Ovary (tissue), 10 donors: ENCODE measurements at regions of chr2 and their contacts with region 1.

Region 1: DNA sequence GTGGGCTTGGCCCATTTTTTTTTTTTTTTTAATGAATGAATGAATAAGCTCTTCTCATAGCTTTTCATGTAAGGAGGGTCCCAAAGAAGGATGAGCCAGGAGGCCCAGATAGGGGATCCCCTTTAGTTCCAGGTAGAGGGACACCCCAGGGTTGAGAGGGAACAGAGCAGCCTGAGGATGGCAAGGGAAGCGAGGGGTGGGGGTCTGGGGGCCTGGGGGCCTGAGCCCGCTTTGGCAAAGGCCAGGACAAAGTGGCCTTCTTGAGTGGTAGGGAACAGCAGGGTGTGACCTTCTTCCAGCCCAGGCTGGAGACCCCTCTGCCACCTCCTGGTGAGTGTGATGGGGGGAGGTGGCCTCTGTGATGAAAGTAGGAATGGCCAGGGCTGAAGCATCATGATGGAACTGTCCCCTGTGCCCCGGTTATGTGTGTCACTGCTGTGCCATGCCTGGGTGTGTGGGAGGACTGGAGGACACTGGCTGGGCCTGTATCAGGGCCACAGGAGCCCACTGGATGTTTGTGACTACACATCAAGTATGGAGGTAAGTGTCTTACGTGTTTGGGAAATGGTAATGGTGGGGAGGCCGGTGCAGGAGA is 263.5 kb upstream of the HDAC4 start:
- DNase-seq: no peak
- H3K4me3 ChIP-seq: no peak overlapping the region
- H3K27ac ChIP-seq: no peak overlapping the region
- H3K4me1 ChIP-seq: no peaks in the 10 kb centered on the region
- H3K27me3 ChIP-seq: no peaks in the 10 kb centered on the region
- CTCF ChIP-seq: no peak
- EP300 ChIP-seq: no peak
- POLR2A ChIP-seq: no peak

Region 2: GRCh38 chr2:239706367-239706766 is 42.1 kb after region 1 on chr2:
- intact Hi-C with region 1: loop called in 1 of 4 experiments (anchors 1 kb)
- DNase-seq: peak in 2 of 5 donors; percentile 33 to 60
- H3K4me3 ChIP-seq: no peak overlapping the region
- H3K27ac ChIP-seq: no peak overlapping the region
- H3K4me1 ChIP-seq: peaks cover 4% of the 10 kb centered on the region
- H3K27me3 ChIP-seq: no peaks in the 10 kb centered on the region
- CTCF ChIP-seq: no peak
- EP300 ChIP-seq: no peak
- POLR2A ChIP-seq: no peak

Region 3: DNA sequence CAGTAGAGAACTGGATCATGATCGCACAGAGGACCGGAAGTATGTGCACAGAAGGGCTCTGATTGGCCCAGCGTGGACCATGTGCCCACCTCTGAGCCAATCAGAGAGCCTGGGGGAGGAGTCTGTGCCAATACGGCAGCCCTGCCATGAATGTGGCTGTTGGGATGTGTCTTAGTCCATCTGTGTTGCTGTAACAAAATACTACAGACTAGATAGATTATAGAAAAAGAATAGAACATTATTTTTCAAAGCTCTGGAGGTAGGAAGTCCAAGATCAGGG is 228.9 kb after region 1 on chr2:
- intact Hi-C with region 1: no loop called
- DNase-seq: no peak
- H3K4me3 ChIP-seq: no peak overlapping the region
- H3K27ac ChIP-seq: no peak overlapping the region
- H3K4me1 ChIP-seq: no peaks in the 10 kb centered on the region
- H3K27me3 ChIP-seq: no peaks in the 10 kb centered on the region
- CTCF ChIP-seq: no peak
- EP300 ChIP-seq: no peak
- POLR2A ChIP-seq: no peak